ENCODE measurements at regions of chr20 and their contacts with region 1.

Region 1: DNA sequence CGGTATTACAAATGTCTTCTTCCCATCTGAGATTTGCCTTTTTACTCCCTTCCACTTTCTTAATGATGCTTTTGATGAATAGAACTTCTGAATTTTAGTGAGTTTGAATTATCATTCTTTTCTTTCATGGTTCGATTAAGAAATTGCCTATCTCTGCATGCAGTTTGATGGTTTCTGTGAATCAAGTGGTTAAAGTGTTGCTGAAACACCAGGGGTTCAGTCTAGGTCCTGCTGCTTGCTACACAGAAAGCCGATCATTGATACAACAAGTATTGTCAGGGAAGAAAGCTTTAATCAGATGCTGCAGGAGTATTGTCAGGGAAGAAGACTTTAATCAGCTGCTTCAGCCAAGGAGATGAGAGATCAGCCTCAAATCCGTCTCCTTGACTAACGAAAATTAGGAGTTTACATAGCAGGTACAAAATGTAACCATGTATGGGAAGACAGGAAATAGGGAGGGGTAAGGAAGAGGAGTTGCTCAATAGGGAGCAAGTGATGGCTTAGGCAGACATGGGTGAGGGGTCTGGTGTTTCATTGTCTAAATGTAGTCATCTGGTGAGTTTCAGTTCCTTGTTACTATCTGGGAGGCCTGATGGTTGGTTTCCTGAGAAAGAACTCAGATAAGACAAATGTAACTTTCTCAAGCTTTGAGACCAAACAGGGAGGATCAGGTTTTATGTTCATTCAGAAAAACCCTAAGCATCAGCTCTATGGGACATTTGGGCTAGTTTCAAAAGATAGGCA is 217.1 kb upstream of the SULF2 start:
- DNase-seq: no peak
- ATAC-seq: no peak
- H3K4me3 ChIP-seq: no peak overlapping the region
- H3K27ac ChIP-seq: no peak overlapping the region
- H3K4me1 ChIP-seq: no peaks in the 10 kb centered on the region
- H3K27me3 ChIP-seq: no peaks in the 10 kb centered on the region
- CTCF ChIP-seq: no peak
- POLR2A ChIP-seq: no peak

Region 2: DNA sequence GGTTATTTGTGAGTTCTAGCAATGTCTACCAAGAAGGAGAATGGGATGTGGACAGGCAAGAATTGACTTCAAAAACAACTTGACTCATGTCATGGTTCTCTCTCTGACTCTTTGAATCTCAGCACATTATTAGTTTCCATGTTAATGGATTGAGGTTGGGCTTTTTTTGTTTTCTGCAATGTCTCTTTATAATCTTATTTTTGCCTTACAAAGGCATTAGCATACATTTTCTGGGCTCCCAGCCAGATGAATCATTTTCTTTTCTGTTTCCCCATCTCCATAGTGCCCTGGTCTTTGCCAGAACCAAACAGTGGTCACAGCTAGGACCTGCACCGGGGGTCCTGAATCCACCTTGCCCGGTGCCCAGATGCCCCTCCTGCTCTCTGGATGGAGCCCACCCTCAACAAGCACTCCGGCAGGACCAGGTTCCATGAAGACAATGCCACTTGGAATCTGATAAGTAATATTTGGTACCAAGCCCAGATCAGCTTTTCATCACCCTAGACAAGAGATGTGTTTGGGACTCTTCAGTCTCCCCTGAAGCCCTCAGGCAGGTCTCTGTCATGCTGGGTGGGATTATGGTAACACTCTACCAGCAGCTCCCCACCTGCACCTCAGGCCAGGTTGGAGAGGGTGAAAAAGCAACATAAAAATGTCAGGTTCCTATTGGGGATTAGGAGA is 49.5 kb after region 1 on chr20:
- intact Hi-C with region 1: loop called (anchors 5 kb)
- DNase-seq: no peak
- ATAC-seq: no peak
- H3K4me3 ChIP-seq: no peak overlapping the region
- H3K27ac ChIP-seq: no peak overlapping the region
- H3K4me1 ChIP-seq: no peaks in the 10 kb centered on the region
- H3K27me3 ChIP-seq: no peaks in the 10 kb centered on the region
- CTCF ChIP-seq: no peak
- POLR2A ChIP-seq: no peak

Region 3: GRCh38 chr20:48283305-48284080 is 281.1 kb after region 1 on chr20:
- intact Hi-C with region 1: no loop called
- DNase-seq: peak; percentile 33 to 66 (median 56)
- ATAC-seq: peak; percentile 58
- H3K4me3 ChIP-seq: no peak overlapping the region
- H3K27ac ChIP-seq: no peak overlapping the region
- H3K4me1 ChIP-seq: peaks cover 30% of the 10 kb centered on the region
- H3K27me3 ChIP-seq: no peaks in the 10 kb centered on the region
- CTCF ChIP-seq: no peak
- POLR2A ChIP-seq: no peak